ENCODE measurements at regions of chr18 and their contacts with region 1.

Region 1: DNA sequence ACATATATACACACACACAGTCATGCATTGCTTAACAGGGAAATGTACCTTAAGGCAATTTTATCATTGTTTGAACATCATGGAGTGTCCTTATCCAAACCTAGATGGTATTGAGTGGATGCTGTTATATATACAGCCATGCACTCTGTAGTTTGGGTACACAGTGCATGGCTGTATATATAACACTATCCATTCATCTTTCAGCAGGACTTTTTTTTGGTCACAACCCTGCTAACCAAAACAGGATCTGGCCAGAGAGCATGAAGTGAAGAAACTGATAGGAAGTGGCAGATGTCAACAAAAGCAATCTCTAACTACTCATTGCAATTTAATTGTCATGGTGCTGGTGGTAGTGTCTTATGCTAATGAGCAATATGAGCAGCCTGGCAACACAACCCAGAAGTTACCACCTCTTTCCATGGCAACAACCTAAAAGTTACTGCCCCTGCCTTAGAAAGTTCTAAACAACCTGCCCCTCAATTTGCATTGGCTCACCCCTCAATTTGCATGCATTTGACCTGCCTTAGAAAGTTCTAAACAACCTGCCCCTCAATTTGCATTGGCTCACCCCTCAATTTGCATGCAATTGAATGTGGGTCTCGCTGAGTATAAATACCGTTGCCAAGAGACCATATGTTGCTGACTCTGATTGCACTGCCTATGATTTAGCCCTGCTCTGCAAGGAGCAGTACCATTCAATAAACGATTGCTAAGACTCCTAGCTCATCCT is 434.9 kb downstream of the DSEL start:
- DNase-seq: no peak
- H3K4me3 Mint-ChIP-seq: no peak overlapping the region
- H3K27ac Mint-ChIP-seq: no peak overlapping the region
- H3K4me1 Mint-ChIP-seq: no peaks in the 10 kb centered on the region
- H3K27me3 Mint-ChIP-seq: no peaks in the 10 kb centered on the region
- CTCF ChIP-seq: no peak

Region 2: DNA sequence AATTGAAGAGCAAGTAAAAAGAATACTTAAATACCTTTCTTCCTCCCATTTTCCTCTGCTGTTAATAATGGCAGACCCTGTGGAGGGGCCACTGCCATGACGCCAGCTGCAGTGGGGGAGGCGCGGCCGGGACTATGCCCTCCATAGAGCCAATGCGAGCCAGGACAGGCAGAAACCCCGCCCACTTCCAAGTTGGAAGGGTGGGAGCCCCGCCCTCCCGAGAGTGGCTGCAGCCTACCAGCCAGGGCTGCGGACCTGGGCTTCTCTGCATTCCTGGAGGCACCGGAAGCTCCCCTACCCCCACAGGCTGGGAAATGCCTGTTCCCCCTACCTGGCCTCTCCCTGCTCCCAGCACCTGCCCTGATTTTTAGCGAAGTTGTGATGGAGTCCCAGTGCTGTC is 38.4 kb before region 1 on chr18:
- CTCF ChIA-PET with region 1: no interaction called
- intact Hi-C with region 1: loop called (anchors 1 kb)
- DNase-seq: no peak
- H3K4me3 Mint-ChIP-seq: no peak overlapping the region
- H3K27ac Mint-ChIP-seq: no peak overlapping the region
- H3K4me1 Mint-ChIP-seq: no peaks in the 10 kb centered on the region
- H3K27me3 Mint-ChIP-seq: no peaks in the 10 kb centered on the region
- CTCF ChIP-seq: no peak

Measured in Calu3 (cell line).